ENCODE measurements at regions of chr13 and their contacts with region 1.

Region 1: DNA sequence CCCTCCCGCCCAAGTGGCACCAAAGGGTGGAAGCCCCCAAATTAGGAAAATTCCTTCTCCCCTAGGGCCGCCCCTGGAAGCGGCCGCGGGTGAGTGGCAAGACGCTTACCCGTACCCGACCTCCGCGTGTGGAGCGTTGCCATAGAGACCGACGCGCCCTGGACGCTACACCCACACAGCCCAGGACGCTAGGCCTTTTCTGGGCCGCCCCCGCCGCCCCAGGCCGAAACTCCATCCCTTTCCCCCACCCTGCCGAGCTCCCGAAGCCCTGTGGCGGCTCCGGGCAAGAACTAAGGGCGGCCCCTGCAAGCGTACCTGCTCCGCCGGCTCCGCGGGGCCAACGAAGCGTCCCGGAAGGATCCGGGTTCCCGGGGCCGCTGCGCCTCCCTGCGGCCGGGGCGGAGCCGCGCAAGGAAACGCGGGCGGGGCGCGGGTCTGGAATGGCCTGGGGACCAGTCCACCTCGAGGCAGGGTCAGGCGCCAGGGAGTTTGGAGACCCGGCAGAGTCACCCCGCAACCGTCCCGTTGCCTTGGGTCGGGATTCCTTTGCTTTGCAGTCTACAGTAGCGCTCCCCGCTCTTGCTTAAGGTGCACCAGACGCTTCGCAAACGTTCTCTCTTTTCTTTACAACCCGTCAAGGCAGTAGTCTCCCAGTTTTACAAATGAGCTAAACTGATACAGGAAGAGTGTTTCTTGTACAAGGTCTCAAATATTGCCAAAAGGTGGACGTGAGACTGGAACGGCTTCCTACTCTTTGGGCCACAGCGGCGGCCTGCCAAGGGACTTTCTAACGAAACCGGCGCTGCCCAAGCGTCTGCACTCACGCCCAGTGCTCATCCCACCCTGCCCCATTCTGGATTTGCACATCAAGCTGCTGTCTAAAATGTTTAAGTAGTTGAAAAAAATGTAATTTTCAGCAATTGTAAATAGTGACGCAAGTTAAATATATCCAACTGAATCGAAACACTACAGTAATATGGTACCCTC is at the start of gene NEK5:
- DNase-seq: no peak
- ATAC-seq: peak; percentile 94
- H3K4me3 ChIP-seq: peak within 1 kb of the TSS; percentile 57 to 67
- H3K27ac ChIP-seq: no peak within 1 kb of the TSS
- H3K4me1 ChIP-seq: peaks cover 7% of the 10 kb centered on the region; the same call in 1 of the 2 replicates
- H3K27me3 ChIP-seq: no peaks in the 10 kb centered on the region
- CTCF ChIP-seq: peak; percentile 87
- total RNA-seq, gene NEK5: 0.08 TPM

Region 2: DNA sequence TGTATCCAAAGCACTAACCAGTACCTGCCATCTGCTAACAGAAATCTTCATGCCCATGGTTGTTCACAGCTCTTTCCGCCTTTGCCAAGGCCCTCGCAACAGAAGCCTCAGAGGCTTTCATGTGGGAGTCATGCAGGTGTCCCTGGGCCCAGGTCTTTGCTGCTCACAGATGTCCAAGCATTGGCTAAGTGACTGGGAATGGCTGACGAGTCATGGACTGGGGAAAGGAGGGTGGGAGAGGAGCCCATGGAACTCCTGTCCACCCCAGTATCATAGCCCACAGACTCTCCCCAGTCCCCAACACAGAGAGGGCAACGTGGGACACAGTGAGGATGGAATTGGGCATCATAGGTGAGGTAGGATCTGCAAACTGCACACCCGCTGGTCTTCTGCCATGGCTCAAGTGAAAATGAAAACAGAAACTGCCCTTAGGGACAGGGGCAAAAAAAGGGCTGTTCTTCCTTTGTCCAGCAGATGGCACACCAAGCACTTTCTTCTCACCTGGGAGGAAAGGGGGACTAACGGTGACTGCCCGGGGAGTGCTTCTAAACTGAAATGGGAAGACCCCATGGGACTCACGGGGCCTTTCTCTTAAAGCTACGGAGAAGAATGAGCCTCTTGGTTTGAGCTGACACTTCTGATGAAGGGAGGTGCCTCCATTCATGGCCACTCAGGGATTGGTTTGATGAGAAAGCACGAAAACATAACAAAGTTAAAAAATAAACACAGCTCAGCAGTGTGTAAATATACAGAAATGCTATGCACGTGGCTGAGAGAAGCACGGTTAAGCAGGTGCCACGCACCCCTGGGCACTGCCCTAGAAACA is 314.0 kb before region 1 on chr13:
- CTCF ChIA-PET with region 1: no interaction called
- POLR2A ChIA-PET with region 1: no interaction called
- in situ Hi-C with region 1: no loop called
- intact Hi-C with region 1: loop called (anchors 2 kb)
- DNase-seq: no peak
- ATAC-seq: peak; percentile 92
- H3K4me3 ChIP-seq: peak overlapping the region; percentile 12 to 43
- H3K27ac ChIP-seq: no peak overlapping the region
- H3K4me1 ChIP-seq: no peaks in the 10 kb centered on the region
- H3K27me3 ChIP-seq: no peaks in the 10 kb centered on the region
- CTCF ChIP-seq: peak; percentile 82

Region 3: GRCh38 chr13:51895906-51896888 is 232.8 kb before region 1 on chr13:
- CTCF ChIA-PET with region 1: interaction called, 4 read pairs
- POLR2A ChIA-PET with region 1: no interaction called
- in situ Hi-C with region 1: no loop called
- intact Hi-C with region 1: loop called (anchors 2 kb)
- DNase-seq: peak; percentile 17
- ATAC-seq: peak; percentile 89
- H3K4me3 ChIP-seq: no peak overlapping the region
- H3K27ac ChIP-seq: no peak overlapping the region
- H3K4me1 ChIP-seq: no peaks in the 10 kb centered on the region; the same call in 1 of the 2 replicates
- H3K27me3 ChIP-seq: no peaks in the 10 kb centered on the region
- CTCF ChIP-seq: peak; percentile 86

Region 4: GRCh38 chr13:51995677-51996551 is 133.1 kb before region 1 on chr13:
- CTCF ChIA-PET with region 1: interaction called, 3 read pairs
- POLR2A ChIA-PET with region 1: no interaction called
- in situ Hi-C with region 1: no loop called
- intact Hi-C with region 1: loop called (anchors 5 kb)
- DNase-seq: no peak
- ATAC-seq: peak; percentile 72
- H3K4me3 ChIP-seq: peak overlapping the region; percentile 11 to 26; a peak in 3 of 4 replicates
- H3K27ac ChIP-seq: peak overlapping the region; percentile 85
- H3K4me1 ChIP-seq: peaks cover 68% of the 10 kb centered on the region
- H3K27me3 ChIP-seq: no peaks in the 10 kb centered on the region
- CTCF ChIP-seq: peak; percentile 10; the same call in 1 of the 2 replicates

Region 5: GRCh38 chr13:52765611-52766390 is 636.8 kb after region 1 on chr13:
- CTCF ChIA-PET with region 1: no interaction called
- POLR2A ChIA-PET with region 1: no interaction called
- in situ Hi-C with region 1: no loop called
- intact Hi-C with region 1: no loop called
- DNase-seq: no peak
- ATAC-seq: no peak
- H3K4me3 ChIP-seq: no peak overlapping the region
- H3K27ac ChIP-seq: no peak overlapping the region
- H3K4me1 ChIP-seq: no peaks in the 10 kb centered on the region
- H3K27me3 ChIP-seq: no peaks in the 10 kb centered on the region
- CTCF ChIP-seq: no peak

Measured in Panc1 (cell line).